ENCODE measurements at regions of chr5 and their contacts with region 1.

Region 1: DNA sequence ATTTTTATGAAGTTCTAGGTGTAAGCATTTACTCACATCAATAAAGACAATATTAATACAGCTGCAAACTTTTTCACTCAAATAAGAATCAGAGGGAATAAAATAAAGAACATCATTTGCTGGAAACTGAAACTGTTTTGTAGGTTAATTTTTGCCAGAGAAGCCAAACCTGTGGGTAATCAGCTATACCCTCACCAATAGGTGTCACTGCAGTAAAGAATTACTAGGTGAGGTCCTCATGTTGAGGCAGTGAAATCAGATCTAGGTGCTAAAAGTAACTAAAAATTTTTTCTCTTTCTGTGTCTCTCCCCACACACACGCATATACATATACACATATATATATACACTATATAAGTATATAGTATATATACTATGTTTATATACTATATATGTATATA is 1016.3 kb upstream of the SEMA6A start:
- DNase-seq: peak in 1 of 2 experiments; percentile 32
- H3K4me3 ChIP-seq: no peak overlapping the region
- H3K4me3 Mint-ChIP-seq: no peak overlapping the region
- H3K27ac Mint-ChIP-seq: no peak overlapping the region
- H3K4me1 ChIP-seq: no peaks in the 10 kb centered on the region
- H3K4me1 Mint-ChIP-seq: no peaks in the 10 kb centered on the region
- H3K27me3 ChIP-seq: no peaks in the 10 kb centered on the region
- H3K27me3 Mint-ChIP-seq: peaks cover 7% of the 10 kb centered on the region
- CTCF ChIP-seq: peak; percentile 44 to 50

Region 2: GRCh38 chr5:117376748-117377147 is 214.2 kb before region 1 on chr5:
- CTCF ChIA-PET with region 1: no interaction called
- POLR2A ChIA-PET with region 1: no interaction called
- intact Hi-C with region 1: no loop called
- DNase-seq: no peak
- H3K4me3 ChIP-seq: no peak overlapping the region
- H3K4me3 Mint-ChIP-seq: no peak overlapping the region
- H3K27ac Mint-ChIP-seq: no peak overlapping the region
- H3K4me1 ChIP-seq: no peaks in the 10 kb centered on the region
- H3K4me1 Mint-ChIP-seq: no peaks in the 10 kb centered on the region
- H3K27me3 ChIP-seq: no peaks in the 10 kb centered on the region
- H3K27me3 Mint-ChIP-seq: no peaks in the 10 kb centered on the region
- CTCF ChIP-seq: no peak

Region 3: DNA sequence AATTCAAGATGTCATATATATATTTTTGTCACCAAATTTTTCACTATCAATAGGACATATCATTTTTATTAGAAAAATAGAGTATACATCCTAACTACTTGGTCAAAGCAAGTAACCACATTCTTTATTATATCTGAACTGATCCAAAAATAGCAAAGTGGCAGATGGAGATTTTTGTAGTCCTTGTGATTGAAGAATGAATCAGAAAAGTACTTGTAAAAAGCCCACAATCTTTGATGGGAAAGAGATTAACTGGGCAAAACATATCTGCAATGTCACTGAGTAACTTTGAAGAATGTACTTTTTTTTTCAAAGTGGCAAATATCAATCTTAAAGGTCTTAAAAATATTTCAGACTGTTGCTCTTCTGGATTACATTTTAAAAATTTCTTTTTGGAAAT is 24.3 kb after region 1 on chr5:
- CTCF ChIA-PET with region 1: no interaction called
- POLR2A ChIA-PET with region 1: no interaction called
- intact Hi-C with region 1: no loop called
- DNase-seq: no peak
- H3K4me3 ChIP-seq: no peak overlapping the region
- H3K4me3 Mint-ChIP-seq: no peak overlapping the region
- H3K27ac Mint-ChIP-seq: no peak overlapping the region
- H3K4me1 ChIP-seq: no peaks in the 10 kb centered on the region
- H3K4me1 Mint-ChIP-seq: no peaks in the 10 kb centered on the region
- H3K27me3 ChIP-seq: no peaks in the 10 kb centered on the region
- H3K27me3 Mint-ChIP-seq: no peaks in the 10 kb centered on the region
- CTCF ChIP-seq: no peak

Region 4: DNA sequence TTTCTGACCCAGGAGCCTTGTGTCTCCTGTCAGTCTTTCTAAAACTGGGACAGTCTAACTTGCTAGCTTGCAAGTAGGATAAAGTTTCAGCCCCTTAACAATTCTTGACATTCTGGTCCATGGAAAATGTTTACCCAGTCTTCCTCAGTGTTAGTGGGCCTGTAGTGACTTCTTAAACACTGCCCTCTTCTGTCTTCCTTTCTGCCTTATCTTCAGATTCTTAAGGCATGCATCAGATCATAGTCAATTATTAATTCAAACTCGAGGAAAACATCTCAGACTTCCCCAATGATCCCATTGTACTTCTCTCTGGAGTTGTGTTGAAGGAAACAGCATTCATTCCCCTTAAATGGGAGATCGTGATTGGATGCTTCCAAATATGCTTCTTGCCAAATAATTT is 197.7 kb after region 1 on chr5:
- CTCF ChIA-PET with region 1: no interaction called
- POLR2A ChIA-PET with region 1: no interaction called
- intact Hi-C with region 1: loop called (anchors 1 kb)
- DNase-seq: no peak
- H3K4me3 ChIP-seq: no peak overlapping the region
- H3K4me3 Mint-ChIP-seq: no peak overlapping the region
- H3K27ac Mint-ChIP-seq: no peak overlapping the region
- H3K4me1 ChIP-seq: no peaks in the 10 kb centered on the region
- H3K4me1 Mint-ChIP-seq: no peaks in the 10 kb centered on the region
- H3K27me3 ChIP-seq: no peaks in the 10 kb centered on the region
- H3K27me3 Mint-ChIP-seq: no peaks in the 10 kb centered on the region
- CTCF ChIP-seq: no peak

Region 5: GRCh38 chr5:118042076-118042475 is 451.1 kb after region 1 on chr5:
- CTCF ChIA-PET with region 1: no interaction called
- POLR2A ChIA-PET with region 1: no interaction called
- intact Hi-C with region 1: loop called (anchors 1 kb)
- DNase-seq: no peak
- H3K4me3 ChIP-seq: no peak overlapping the region
- H3K4me3 Mint-ChIP-seq: no peak overlapping the region
- H3K27ac Mint-ChIP-seq: no peak overlapping the region
- H3K4me1 ChIP-seq: no peaks in the 10 kb centered on the region
- H3K4me1 Mint-ChIP-seq: no peaks in the 10 kb centered on the region
- H3K27me3 ChIP-seq: no peaks in the 10 kb centered on the region
- H3K27me3 Mint-ChIP-seq: peaks cover 4% of the 10 kb centered on the region
- CTCF ChIP-seq: peak; percentile 22 to 40

Measured in Caco-2 (cell line).